CD8-positive, alpha-beta T cell (primary cell): ENCODE measurements at regions of chr21 and their contacts with region 1.

Region 1: DNA sequence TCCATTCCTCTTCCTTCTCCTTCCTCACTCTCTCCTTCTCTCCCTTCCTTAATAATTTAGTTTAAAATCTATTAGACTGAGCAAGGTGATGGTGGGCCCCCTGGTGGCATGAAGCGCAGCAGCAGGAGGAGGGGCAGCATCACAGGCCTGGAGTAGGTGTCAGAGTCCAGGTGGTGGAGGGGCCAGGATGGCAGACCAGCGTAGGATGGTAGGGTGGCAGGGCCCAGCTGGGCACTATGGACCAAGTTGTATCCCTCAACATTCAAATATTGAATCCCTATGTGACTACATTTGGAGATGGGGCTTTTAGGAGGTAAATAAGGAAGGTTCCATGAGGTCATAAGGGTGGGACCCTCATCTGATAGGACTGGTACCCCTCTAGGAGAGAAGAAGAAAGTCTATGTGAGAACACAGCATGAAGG is 61.0 kb downstream of the WDR4 start:
- DNase-seq: peak; percentile 32 to 83 (median 67)
- ATAC-seq: peak; percentile 91
- H3K4me3 ChIP-seq: no peak overlapping the region
- H3K4me3 Mint-ChIP-seq: no peak overlapping the region
- H3K27ac ChIP-seq: no peak overlapping the region
- H3K27ac Mint-ChIP-seq: peak overlapping the region; percentile 73
- H3K4me1 ChIP-seq: no peaks in the 10 kb centered on the region
- H3K4me1 Mint-ChIP-seq: peaks cover 3% of the 10 kb centered on the region
- H3K27me3 ChIP-seq: peaks cover 0 to 2% of the 10 kb centered on the region in 2 experiments
- H3K27me3 Mint-ChIP-seq: peaks cover 9% of the 10 kb centered on the region
- CTCF ChIP-seq: peak; percentile 98

Region 2: DNA sequence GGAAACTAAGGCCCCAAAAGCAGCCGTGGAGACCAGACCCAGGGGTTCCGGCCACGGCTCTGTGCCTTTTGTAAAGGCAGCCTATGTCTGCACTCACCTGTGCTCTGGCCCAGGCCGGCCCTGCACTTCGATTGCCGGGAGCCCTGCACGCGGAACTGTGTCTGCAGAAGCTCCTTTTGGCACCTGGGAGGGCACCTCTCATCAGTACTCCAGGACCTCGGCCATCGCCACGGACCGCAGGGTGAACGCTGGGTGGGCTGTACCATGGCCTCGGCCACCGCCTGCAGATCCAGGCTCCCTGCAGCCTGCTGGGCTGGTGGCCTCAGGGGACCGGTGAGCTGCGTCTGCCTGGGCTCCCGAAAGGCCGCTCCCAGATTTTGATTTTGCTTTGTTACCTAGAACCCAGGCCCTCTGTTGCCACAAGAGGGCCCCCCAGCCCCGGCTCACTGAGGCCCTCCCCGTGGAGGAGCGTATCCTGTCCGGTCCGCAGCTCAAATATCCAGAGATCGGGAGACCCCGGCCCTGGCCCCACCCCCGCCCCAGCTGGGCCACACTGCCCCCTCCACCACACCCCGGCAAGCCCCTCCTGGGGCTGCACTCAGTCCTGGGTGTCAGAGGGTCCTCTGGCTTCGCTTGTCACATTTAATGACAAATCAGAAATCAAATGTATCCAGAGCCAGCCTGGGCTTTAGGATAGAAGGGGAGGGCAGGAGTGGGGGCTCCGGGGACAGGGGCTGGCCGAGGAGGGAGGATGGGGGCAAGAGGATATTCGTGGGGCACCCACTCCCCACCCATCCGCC is 225.1 kb before region 1 on chr21:
- CTCF ChIA-PET with region 1: interaction called, 59 read pairs
- POLR2A ChIA-PET with region 1: interaction called, 3 read pairs
- intact Hi-C with region 1: loop called (anchors 2 to 5 kb)
- DNase-seq: peak; percentile 41 to 85 (median 67)
- ATAC-seq: peak; percentile 84
- H3K4me3 ChIP-seq: no peak overlapping the region
- H3K4me3 Mint-ChIP-seq: no peak overlapping the region
- H3K27ac ChIP-seq: no peak overlapping the region
- H3K27ac Mint-ChIP-seq: no peak overlapping the region
- H3K4me1 ChIP-seq: peaks cover 14% of the 10 kb centered on the region
- H3K4me1 Mint-ChIP-seq: peaks cover 14% of the 10 kb centered on the region
- H3K27me3 ChIP-seq: peaks cover 0 to 3% of the 10 kb centered on the region in 2 experiments
- H3K27me3 Mint-ChIP-seq: no peaks in the 10 kb centered on the region
- CTCF ChIP-seq: peak; percentile 88

Region 3: GRCh38 chr21:42684109-42684916 is 134.0 kb before region 1 on chr21:
- CTCF ChIA-PET with region 1: interaction called, 4 read pairs
- POLR2A ChIA-PET with region 1: no interaction called
- intact Hi-C with region 1: loop called in 1 of 2 experiments (anchors 2 kb)
- DNase-seq: peak in 8 of 9 experiments; percentile 20 to 77 (median 58)
- ATAC-seq: peak; percentile 67
- H3K4me3 ChIP-seq: peak overlapping the region in 1 of 2 experiments; percentile 22
- H3K4me3 Mint-ChIP-seq: peak overlapping the region; percentile 74
- H3K27ac ChIP-seq: peak overlapping the region in 1 of 2 experiments; percentile 12
- H3K27ac Mint-ChIP-seq: peak overlapping the region; percentile 87
- H3K4me1 ChIP-seq: peaks cover 45% of the 10 kb centered on the region
- H3K4me1 Mint-ChIP-seq: peaks cover 49% of the 10 kb centered on the region
- H3K27me3 ChIP-seq: no peaks in the 10 kb centered on the region
- H3K27me3 Mint-ChIP-seq: no peaks in the 10 kb centered on the region
- CTCF ChIP-seq: no peak

Region 4: GRCh38 chr21:42760951-42761680 is 57.2 kb before region 1 on chr21:
- CTCF ChIA-PET with region 1: no interaction called
- POLR2A ChIA-PET with region 1: no interaction called
- intact Hi-C with region 1: no loop called
- DNase-seq: no peak
- ATAC-seq: no peak
- H3K4me3 ChIP-seq: no peak overlapping the region
- H3K4me3 Mint-ChIP-seq: no peak overlapping the region
- H3K27ac ChIP-seq: no peak overlapping the region
- H3K27ac Mint-ChIP-seq: no peak overlapping the region
- H3K4me1 ChIP-seq: no peaks in the 10 kb centered on the region
- H3K4me1 Mint-ChIP-seq: no peaks in the 10 kb centered on the region
- H3K27me3 ChIP-seq: peaks cover 0 to 3% of the 10 kb centered on the region in 2 experiments
- H3K27me3 Mint-ChIP-seq: no peaks in the 10 kb centered on the region
- CTCF ChIP-seq: no peak

Region 5: DNA sequence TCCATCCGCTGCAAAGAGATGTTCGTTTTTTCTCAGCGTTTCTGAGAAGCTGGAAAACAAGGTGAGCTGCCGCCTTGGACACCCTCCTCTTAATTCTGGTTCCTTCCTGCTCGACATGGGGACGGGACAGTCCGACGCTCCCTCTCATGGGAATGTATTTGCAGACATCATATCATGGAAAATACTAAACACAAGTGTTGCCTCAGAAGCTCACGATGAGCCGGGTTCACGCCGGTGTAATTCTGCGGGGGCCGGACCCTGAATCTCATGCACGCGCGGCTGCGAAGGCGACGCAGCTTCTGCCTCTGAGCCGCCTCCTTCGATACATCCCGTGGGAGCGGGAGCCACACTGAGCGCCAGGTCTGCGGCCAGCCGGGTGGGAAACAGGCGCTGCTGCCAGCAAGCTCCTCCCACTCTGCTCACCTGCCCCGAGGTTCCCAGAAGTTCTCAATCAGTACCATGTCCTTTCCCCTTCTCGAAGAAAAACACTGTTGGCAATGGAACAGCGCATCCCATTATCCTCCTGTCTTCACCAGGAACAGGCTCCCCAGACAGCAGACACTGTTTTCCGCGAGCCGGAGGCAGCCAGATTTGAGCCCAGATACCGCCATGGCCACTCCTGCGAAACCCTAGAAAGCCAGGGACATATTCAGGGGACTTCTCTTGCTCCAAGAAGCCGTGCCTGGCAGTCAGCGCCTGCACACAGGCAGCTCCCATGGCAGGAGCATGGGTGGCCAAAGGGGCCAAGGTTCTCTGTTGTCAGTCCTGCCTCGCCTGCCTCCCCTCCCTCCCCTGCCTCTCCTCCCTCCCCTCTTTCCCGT is 37.0 kb before region 1 on chr21:
- CTCF ChIA-PET with region 1: interaction called, 6 read pairs
- POLR2A ChIA-PET with region 1: no interaction called
- intact Hi-C with region 1: loop called in 1 of 2 experiments (anchors 1 kb)
- DNase-seq: peak in 1 of 9 experiments; percentile 15
- ATAC-seq: no peak
- H3K4me3 ChIP-seq: peak overlapping the region in 1 of 2 experiments; percentile 5
- H3K4me3 Mint-ChIP-seq: peak overlapping the region; percentile 47
- H3K27ac ChIP-seq: no peak overlapping the region
- H3K27ac Mint-ChIP-seq: no peak overlapping the region
- H3K4me1 ChIP-seq: peaks cover 44% of the 10 kb centered on the region
- H3K4me1 Mint-ChIP-seq: peaks cover 51% of the 10 kb centered on the region
- H3K27me3 ChIP-seq: no peaks in the 10 kb centered on the region
- H3K27me3 Mint-ChIP-seq: no peaks in the 10 kb centered on the region
- CTCF ChIP-seq: no peak